ENCODE measurements at regions of chr9 and their contacts with region 1.

Region 1: GRCh38 chr9:4740638-4741364 is at the start of gene AK3:
- DNase-seq: peak in 1 of 2 donors; percentile 90
- H3K4me3 ChIP-seq: peak within 1 kb of the TSS; percentile 98 to 99
- H3K27ac ChIP-seq: peak within 1 kb of the TSS; percentile 98
- H3K4me1 ChIP-seq: peaks cover 31% of the 10 kb centered on the region
- H3K27me3 ChIP-seq: no peaks in the 10 kb centered on the region
- CTCF ChIP-seq: no peak
- POLR2A ChIP-seq: peak in 1 of 2 donors; percentile 84
- total RNA-seq, gene AK3: 72.4 TPM

Region 2: DNA sequence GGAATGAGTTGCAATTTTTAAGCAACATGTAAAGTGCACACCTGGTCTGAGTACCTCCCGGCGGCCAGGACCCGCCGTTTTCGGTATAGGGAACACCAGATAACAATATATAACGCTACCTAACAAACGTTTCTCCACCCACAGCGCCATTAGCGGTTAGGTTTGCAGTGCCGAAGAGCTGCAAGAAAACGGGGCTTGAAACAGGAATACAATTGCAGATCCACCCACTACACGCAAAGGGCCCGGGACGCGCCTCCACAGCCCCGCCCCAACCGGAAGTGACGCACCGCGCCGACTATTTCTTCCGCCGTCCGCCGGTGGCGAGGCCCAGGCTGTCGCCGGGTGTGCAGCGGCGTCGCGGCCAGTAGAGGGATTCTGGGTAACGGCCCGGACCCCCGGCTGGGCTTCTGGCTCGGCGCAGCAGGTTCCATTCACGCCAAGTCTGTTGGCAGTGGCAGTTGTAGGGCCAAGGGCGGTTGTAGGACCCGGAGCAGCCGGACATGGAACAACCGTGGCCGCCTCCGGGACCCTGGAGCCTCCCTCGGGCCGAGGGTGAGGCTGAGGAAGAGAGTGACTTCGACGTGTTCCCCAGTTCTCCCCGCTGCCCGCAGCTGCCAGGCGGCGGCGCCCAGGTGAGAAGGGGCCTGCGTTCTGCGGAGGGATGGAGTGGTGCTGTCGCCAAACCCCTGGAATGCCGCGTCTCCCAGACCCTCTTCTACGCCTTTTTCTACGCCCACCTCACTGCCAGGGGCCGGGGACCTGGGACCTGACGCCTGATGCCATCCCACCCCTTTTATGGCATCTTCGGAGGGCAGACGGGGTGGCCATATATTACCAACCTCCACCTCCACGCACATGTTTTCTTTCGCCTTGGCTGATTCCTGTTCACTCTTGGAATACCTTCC is 61.3 kb before region 1 on chr9 and contains the start of gene CDC37L1:
- intact Hi-C with region 1: loop called (anchors 5 kb)
- DNase-seq: peak; percentile 98
- H3K4me3 ChIP-seq: peak within 1 kb of the TSS; percentile 77 to 94
- H3K27ac ChIP-seq: peak within 1 kb of the TSS; percentile 98
- H3K4me1 ChIP-seq: peaks cover 33% of the 10 kb centered on the region
- H3K27me3 ChIP-seq: no peaks in the 10 kb centered on the region
- CTCF ChIP-seq: peak in 2 of 3 experiments; percentile 13 to 77
- POLR2A ChIP-seq: peak; percentile 50 to 98
- total RNA-seq, gene CDC37L1: 23.8 TPM